ENCODE measurements at regions of chr1 and their contacts with region 1.

Region 1: GRCh38 chr1:173202430-173203145 is 4.5 kb downstream of the TNFSF4 start:
- DNase-seq: peak; percentile 83
- H3K4me3 Mint-ChIP-seq: no peak overlapping the region
- H3K27ac Mint-ChIP-seq: no peak overlapping the region
- H3K4me1 Mint-ChIP-seq: peaks cover 25% of the 10 kb centered on the region
- H3K27me3 Mint-ChIP-seq: no peaks in the 10 kb centered on the region
- CTCF ChIP-seq: peak; percentile 92

Region 2: GRCh38 chr1:172609528-172609927 is 593.1 kb before region 1 on chr1:
- CTCF ChIA-PET with region 1: interaction called, 3 read pairs
- POLR2A ChIA-PET with region 1: interaction called, 3 read pairs
- intact Hi-C with region 1: loop called (anchors 1 kb)
- DNase-seq: peak; percentile 40
- H3K4me3 Mint-ChIP-seq: no peak overlapping the region
- H3K27ac Mint-ChIP-seq: no peak overlapping the region
- H3K4me1 Mint-ChIP-seq: peaks cover 8% of the 10 kb centered on the region
- H3K27me3 Mint-ChIP-seq: no peaks in the 10 kb centered on the region
- CTCF ChIP-seq: peak; percentile 37

Region 3: DNA sequence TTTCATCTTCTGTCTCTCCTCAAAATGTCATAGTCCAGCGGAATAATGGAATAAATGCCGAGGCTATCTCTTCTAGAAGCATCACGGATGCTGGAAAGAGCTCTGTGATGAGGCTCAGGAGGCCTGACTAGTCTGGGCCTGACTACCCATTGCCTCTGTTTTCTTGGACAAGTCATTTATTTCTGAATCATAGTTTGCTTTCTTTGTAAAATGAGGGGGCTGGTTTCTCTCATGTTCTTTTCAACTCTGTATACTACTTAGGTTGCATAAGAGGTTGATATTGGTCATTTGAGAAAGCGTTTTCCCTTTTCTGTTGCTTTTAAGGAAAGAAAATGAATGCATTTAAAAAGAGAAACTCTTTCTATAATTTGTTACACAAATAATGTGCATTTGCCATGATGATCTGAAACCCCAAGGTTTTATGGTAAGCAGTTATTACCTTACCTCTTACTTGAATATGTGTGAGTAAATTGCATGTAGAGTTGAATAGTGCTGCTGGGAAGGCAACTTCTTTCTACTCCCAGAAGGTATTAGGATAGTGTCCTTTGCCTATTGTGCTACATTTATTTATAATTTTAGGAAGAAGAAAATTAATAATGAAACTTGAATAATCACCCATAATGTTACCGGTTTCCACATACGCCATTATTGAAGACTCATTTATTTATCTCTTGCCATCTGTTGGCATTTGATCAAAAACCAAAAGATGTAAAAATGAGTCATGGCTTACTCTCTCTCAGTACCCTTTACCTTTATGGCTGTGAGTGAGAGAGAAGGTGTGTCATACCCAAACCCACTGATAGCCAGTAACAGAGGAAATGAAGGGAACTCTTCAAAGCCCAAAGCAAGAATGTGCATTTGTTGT is 364.5 kb before region 1 on chr1:
- CTCF ChIA-PET with region 1: interaction called, 35 read pairs
- POLR2A ChIA-PET with region 1: interaction called, 3 read pairs
- intact Hi-C with region 1: no loop called
- DNase-seq: peak; percentile 90
- H3K4me3 Mint-ChIP-seq: no peak overlapping the region
- H3K27ac Mint-ChIP-seq: no peak overlapping the region
- H3K4me1 Mint-ChIP-seq: peaks cover 16% of the 10 kb centered on the region
- H3K27me3 Mint-ChIP-seq: no peaks in the 10 kb centered on the region
- CTCF ChIP-seq: no peak

Region 4: GRCh38 chr1:172851871-172852270 is 350.7 kb before region 1 on chr1:
- CTCF ChIA-PET with region 1: no interaction called
- POLR2A ChIA-PET with region 1: no interaction called
- intact Hi-C with region 1: no loop called
- DNase-seq: no peak
- H3K4me3 Mint-ChIP-seq: no peak overlapping the region
- H3K27ac Mint-ChIP-seq: no peak overlapping the region
- H3K4me1 Mint-ChIP-seq: no peaks in the 10 kb centered on the region
- H3K27me3 Mint-ChIP-seq: no peaks in the 10 kb centered on the region
- CTCF ChIP-seq: no peak

Region 5: DNA sequence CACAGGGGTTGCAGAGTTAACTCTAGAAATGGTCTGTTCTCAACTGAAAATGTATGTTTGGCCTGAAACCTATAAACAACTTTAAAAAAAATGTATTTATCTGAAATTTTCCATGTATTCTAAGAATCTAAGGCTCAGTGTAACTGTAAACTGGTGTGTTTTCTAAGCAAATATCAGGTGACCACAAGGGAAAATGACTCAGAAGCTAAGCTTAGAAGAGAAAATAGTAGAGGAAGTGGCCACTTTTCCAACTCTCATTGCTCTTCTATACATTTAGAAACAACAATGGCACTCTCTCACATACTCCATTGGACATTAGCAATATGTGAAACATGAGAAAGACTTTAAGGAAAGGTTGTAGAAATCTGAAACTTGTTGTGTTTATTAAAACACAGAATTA is 159.3 kb before region 1 on chr1:
- CTCF ChIA-PET with region 1: interaction called, 10 read pairs
- POLR2A ChIA-PET with region 1: no interaction called
- intact Hi-C with region 1: no loop called
- DNase-seq: peak; percentile 57
- H3K4me3 Mint-ChIP-seq: no peak overlapping the region
- H3K27ac Mint-ChIP-seq: no peak overlapping the region
- H3K4me1 Mint-ChIP-seq: peaks cover 11% of the 10 kb centered on the region
- H3K27me3 Mint-ChIP-seq: no peaks in the 10 kb centered on the region
- CTCF ChIP-seq: no peak

Region 6: DNA sequence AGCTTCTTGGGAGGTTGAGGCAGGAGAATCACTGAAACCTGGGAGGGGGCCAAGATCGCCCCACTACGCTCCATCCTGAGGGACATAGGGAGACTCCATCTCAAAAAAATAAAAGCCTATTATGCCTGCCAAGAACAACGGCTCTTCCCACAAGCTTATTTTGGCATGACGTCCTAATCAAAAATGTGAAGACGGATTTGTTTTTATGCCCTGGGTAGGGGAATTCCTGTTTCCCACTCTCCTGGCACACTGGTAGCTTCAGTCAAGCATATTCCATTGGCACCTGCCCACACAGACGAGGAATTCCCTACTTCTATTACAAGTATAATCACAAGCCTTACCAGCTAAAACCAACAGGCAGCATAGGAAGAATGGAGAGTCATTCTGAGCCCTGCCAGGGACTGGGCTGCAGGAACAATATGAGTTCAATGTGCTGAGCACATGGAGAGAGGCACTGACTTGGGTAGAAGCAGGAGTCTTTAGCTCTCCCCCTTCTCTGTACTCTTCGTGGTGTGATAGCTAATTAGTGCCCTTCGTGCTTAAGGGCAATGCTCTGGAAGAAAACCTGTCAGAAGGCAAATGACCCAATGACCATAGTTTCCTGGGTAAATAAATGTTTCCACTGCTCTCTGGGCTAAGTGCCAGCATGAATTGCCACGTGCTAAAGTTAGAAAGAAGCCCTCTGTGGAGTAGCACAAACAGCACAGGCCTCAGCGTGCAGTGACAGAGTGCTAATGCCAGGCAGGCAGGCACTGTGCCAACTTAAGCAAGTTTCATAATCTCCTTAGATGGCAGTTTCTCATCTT is 12.3 kb before region 1 on chr1:
- CTCF ChIA-PET with region 1: interaction called, 104 read pairs
- POLR2A ChIA-PET with region 1: interaction called, 6 read pairs
- intact Hi-C with region 1: no loop called
- DNase-seq: peak; percentile 100
- H3K4me3 Mint-ChIP-seq: peak overlapping the region; percentile 44
- H3K27ac Mint-ChIP-seq: peak overlapping the region; percentile 93
- H3K4me1 Mint-ChIP-seq: peaks cover 29% of the 10 kb centered on the region
- H3K27me3 Mint-ChIP-seq: no peaks in the 10 kb centered on the region
- CTCF ChIP-seq: no peak

Region 7: GRCh38 chr1:173255214-173255813 is 52.7 kb after region 1 on chr1:
- CTCF ChIA-PET with region 1: interaction called, 11 read pairs
- POLR2A ChIA-PET with region 1: no interaction called
- intact Hi-C with region 1: no loop called
- DNase-seq: peak; percentile 75
- H3K4me3 Mint-ChIP-seq: no peak overlapping the region
- H3K27ac Mint-ChIP-seq: no peak overlapping the region
- H3K4me1 Mint-ChIP-seq: no peaks in the 10 kb centered on the region
- H3K27me3 Mint-ChIP-seq: no peaks in the 10 kb centered on the region
- CTCF ChIP-seq: peak; percentile 83

Measured in MCF 10A (cell line).